A673 (cell line): ENCODE measurements at regions of chr12 and their contacts with region 1.

Region 1: GRCh38 chr12:32181498-32182175 is 75.0 kb downstream of the BICD1 start:
- DNase-seq: no peak
- H3K4me3 ChIP-seq: no peak overlapping the region
- H3K27ac ChIP-seq: no peak overlapping the region
- H3K4me1 ChIP-seq: peaks cover 23% of the 10 kb centered on the region
- H3K27me3 ChIP-seq: no peaks in the 10 kb centered on the region
- CTCF ChIP-seq: no peak

Region 2: GRCh38 chr12:32240831-32241230 is 59.2 kb after region 1 on chr12:
- CTCF ChIA-PET with region 1: no interaction called
- POLR2A ChIA-PET with region 1: no interaction called
- intact Hi-C with region 1: loop called (anchors 10 kb)
- DNase-seq: no peak
- H3K4me3 ChIP-seq: no peak overlapping the region
- H3K27ac ChIP-seq: no peak overlapping the region
- H3K4me1 ChIP-seq: no peaks in the 10 kb centered on the region
- H3K27me3 ChIP-seq: no peaks in the 10 kb centered on the region
- CTCF ChIP-seq: no peak